ENCODE measurements at regions of chr19 and their contacts with region 1.

Region 1: GRCh38 chr19:12766051-12766521 is 9.3 kb downstream of the HOOK2 start:
- DNase-seq: peak; percentile 87
- ATAC-seq: peak; percentile 65
- H3K4me3 ChIP-seq: no peak overlapping the region
- H3K4me3 Mint-ChIP-seq: no peak overlapping the region
- H3K27ac ChIP-seq: no peak overlapping the region
- H3K27ac Mint-ChIP-seq: no peak overlapping the region
- H3K4me1 ChIP-seq: peaks cover 6 to 8% of the 10 kb centered on the region in 2 donors
- H3K4me1 Mint-ChIP-seq: peaks cover 10% of the 10 kb centered on the region
- H3K27me3 ChIP-seq: no peaks in the 10 kb centered on the region
- H3K27me3 Mint-ChIP-seq: no peaks in the 10 kb centered on the region
- CTCF ChIP-seq: peak; percentile 90

Region 2: DNA sequence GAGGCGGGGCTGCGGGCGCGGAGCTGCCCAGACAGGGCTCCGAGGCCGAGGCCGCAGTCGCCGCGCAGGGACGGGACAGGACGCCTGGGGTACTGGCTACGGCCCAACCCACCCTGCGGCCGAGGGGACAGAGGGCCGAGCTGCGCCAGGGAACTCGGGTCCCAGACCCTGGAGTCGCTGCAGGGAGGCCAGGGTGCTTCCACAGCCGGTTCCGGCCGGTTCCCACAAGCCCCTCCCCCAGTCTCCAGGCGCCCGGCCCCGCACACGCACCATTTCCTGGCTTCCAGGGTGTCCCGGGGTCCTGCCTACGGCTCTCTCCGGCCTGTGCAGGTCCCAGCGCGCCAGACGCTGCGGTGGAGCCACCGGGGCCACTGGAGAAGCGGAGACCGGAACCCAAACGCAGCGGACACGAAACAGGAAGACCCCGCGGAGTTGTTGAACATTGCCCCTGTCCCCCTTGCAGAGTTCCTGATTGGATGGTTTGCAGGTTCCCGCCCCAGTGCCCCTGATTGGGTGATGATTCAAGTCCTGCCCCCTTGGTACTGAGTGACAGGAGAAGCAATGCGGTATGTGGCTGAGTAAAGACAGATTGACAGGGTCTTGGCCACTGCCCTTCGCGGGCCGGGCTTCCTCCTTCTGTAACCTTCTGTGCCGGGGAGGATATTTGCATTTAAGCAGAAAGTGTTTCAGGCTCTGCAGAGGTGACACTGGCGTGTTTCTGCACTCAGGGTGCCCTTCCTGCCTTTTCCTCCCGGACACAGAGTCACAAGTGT is 214.8 kb before region 1 on chr19 and contains the start of gene ZNF564:
- CTCF ChIA-PET with region 1: no interaction called
- POLR2A ChIA-PET with region 1: no interaction called
- intact Hi-C with region 1: no loop called
- DNase-seq: peak; percentile 96
- ATAC-seq: peak; percentile 98
- H3K4me3 ChIP-seq: peak within 1 kb of the TSS; percentile 81 to 95 (median 86)
- H3K4me3 Mint-ChIP-seq: peak within 1 kb of the TSS; percentile 100
- H3K27ac ChIP-seq: peak within 1 kb of the TSS; percentile 70 to 87
- H3K27ac Mint-ChIP-seq: peak within 1 kb of the TSS; percentile 94
- H3K4me1 ChIP-seq: peaks cover 20 to 29% of the 10 kb centered on the region in 2 donors
- H3K4me1 Mint-ChIP-seq: peaks cover 45% of the 10 kb centered on the region
- H3K27me3 ChIP-seq: no peaks in the 10 kb centered on the region
- H3K27me3 Mint-ChIP-seq: no peaks in the 10 kb centered on the region
- CTCF ChIP-seq: no peak
- total RNA-seq, gene ZNF564: 31.8 and 35.8 TPM in 2 replicates

Region 3: GRCh38 chr19:12749938-12750521 is 16.1 kb before region 1 on chr19:
- CTCF ChIA-PET with region 1: interaction called, 29 read pairs
- POLR2A ChIA-PET with region 1: no interaction called
- intact Hi-C with region 1: no loop called
- DNase-seq: no peak
- ATAC-seq: no peak
- H3K4me3 ChIP-seq: no peak overlapping the region
- H3K4me3 Mint-ChIP-seq: no peak overlapping the region
- H3K27ac ChIP-seq: no peak overlapping the region
- H3K27ac Mint-ChIP-seq: no peak overlapping the region
- H3K4me1 ChIP-seq: peaks cover 5 to 7% of the 10 kb centered on the region in 2 donors
- H3K4me1 Mint-ChIP-seq: peaks cover 4% of the 10 kb centered on the region
- H3K27me3 ChIP-seq: peaks cover 0 to 14% (median 0%) of the 10 kb centered on the region in 4 experiments
- H3K27me3 Mint-ChIP-seq: peaks cover 24% of the 10 kb centered on the region
- CTCF ChIP-seq: no peak

Region 4: GRCh38 chr19:12777217-12778016 is 11.3 kb after region 1 on chr19:
- CTCF ChIA-PET with region 1: interaction called, 64 read pairs
- POLR2A ChIA-PET with region 1: no interaction called
- intact Hi-C with region 1: no loop called
- DNase-seq: peak; percentile 90
- ATAC-seq: peak; percentile 29
- H3K4me3 ChIP-seq: peak overlapping the region; percentile 63 to 89 (median 75)
- H3K4me3 Mint-ChIP-seq: peak overlapping the region; percentile 88
- H3K27ac ChIP-seq: peak overlapping the region; percentile 83 to 86
- H3K27ac Mint-ChIP-seq: peak overlapping the region; percentile 84
- H3K4me1 ChIP-seq: peaks cover 27 to 47% of the 10 kb centered on the region in 2 donors
- H3K4me1 Mint-ChIP-seq: peaks cover 48% of the 10 kb centered on the region
- H3K27me3 ChIP-seq: no peaks in the 10 kb centered on the region
- H3K27me3 Mint-ChIP-seq: no peaks in the 10 kb centered on the region
- CTCF ChIP-seq: peak; percentile 99

Measured in B cell (primary cell).